Endothelial cell of umbilical vein (primary cell): ENCODE measurements at regions of chr10 and their contacts with region 1.

Region 1: DNA sequence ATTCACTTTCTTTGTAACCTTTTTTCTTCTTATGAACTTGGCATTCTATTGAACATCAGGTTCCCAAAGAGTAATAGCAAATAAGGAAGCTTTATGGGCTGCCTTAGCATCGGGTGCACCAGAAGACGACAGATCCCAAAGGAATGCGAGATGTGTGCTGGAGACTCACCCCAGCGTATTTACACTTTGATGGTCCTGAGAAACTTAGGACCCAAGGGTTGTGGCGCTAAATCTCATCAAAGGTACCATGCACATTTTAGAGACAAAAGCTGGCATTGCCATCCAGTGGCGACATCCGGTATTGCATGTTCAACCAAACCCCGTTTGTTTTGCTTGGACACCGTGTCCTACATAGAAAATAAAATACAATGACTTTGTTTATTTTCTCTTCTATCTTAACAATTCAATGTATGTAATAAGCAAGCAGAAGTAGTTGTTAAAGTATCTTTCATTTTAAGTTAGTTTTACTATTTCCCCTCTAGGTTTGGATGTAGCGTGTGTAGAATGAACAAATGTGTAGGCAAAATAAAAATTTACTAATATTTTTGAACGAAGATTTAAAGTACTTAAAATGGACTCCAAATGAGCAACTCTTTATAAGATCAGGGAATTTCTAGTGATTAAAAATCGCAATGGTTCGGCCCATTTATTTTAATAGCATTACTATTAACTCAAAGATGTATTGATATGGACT is 1154.8 kb downstream of the GATA3 start:
- DNase-seq: peak; percentile 82
- H3K4me3 ChIP-seq: no peak overlapping the region
- H3K27ac ChIP-seq: no peak overlapping the region
- H3K4me1 ChIP-seq: peaks cover 2% of the 10 kb centered on the region
- H3K27me3 ChIP-seq: no peaks in the 10 kb centered on the region
- CTCF ChIP-seq: peak; percentile 79 to 84
- POLR2A ChIP-seq: no peak

Region 2: DNA sequence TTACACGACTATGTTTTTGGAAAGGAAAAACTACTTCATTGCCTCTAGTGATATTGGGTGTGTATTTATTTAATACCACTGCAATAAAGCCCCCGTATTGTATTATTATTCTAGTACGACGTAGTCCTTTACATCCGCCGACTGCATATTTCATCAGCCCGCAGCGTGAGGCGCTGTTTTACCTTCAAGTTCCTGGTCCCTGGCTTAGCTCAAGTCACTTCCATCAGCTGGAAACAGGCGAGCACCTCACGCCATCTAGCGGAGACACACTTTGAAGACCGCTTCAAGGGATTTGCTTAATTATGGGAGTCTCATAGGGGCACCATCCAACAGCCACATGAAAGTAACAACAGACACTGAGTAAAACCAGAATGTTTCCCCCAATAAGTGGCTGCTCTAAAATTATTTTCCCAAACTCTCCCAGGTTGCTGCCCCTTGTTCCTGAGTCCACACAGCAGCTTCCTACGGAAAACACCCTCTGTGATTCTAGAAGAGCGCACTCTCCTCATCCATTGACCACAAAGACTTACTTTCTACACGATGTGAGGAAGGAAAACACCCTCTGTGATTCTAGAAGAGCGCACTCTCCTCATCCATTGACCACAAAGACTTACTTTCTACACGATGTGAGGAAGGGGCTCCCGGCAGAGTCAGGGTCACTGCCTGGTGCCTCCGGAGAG is 1521.9 kb before region 1 on chr10:
- CTCF ChIA-PET with region 1: interaction called, 11 read pairs
- POLR2A ChIA-PET with region 1: no interaction called
- dilution Hi-C with region 1: no loop called
- intact Hi-C with region 1: no loop called
- DNase-seq: peak; percentile 86
- H3K4me3 ChIP-seq: no peak overlapping the region
- H3K27ac ChIP-seq: no peak overlapping the region
- H3K4me1 ChIP-seq: no peaks in the 10 kb centered on the region
- H3K27me3 ChIP-seq: peaks cover 0 to 1% of the 10 kb centered on the region in 2 experiments
- CTCF ChIP-seq: peak; percentile 83 to 88
- POLR2A ChIP-seq: no peak

Region 3: DNA sequence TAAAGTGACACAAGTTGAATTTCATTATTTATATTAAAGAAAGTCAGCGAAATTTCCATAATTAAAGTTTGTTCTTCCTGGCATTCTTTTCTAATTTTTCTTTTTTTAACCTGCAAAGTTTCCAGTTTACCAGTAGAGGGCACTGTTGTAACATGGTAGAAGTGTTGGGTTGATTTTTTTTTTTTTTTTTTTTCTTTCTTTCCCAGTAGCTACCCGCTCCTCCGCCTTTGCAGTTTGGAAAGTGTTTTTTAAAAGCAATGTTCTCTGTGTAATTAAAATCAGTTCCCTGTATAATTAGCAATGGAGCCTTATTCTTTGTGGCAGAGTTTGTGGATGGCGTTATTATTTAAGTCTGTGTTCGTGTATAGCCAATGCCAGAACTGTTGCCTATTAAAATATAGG is 1337.2 kb before region 1 on chr10:
- CTCF ChIA-PET with region 1: interaction called, 64 read pairs
- POLR2A ChIA-PET with region 1: interaction called, 3 read pairs
- dilution Hi-C with region 1: no loop called
- intact Hi-C with region 1: loop called (anchors 1 kb)
- DNase-seq: peak; percentile 68
- H3K4me3 ChIP-seq: peak overlapping the region; percentile 26 to 78 (median 32)
- H3K27ac ChIP-seq: no peak overlapping the region
- H3K4me1 ChIP-seq: peaks cover 13% of the 10 kb centered on the region
- H3K27me3 ChIP-seq: no peaks in the 10 kb centered on the region
- CTCF ChIP-seq: peak; percentile 43 to 46
- POLR2A ChIP-seq: no peak

Region 4: DNA sequence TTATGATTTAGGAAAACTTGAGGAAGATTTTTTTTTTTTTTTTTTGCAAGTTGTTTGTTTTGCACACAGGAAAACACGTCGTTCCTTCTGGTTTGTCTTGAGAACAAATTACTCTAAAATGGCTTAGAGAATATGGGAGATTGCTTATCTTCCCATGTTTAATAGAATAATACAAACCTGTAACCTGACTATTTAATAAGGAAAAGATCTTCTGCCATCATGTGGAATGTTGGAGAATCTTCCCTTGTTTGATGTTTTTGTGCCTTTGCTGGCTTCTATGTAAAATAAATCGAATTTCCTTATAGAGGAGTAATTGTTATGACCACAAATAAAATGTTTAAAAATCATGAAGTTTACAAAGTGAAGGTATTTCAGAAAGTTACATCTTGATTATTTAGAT is 335.9 kb before region 1 on chr10:
- CTCF ChIA-PET with region 1: no interaction called
- POLR2A ChIA-PET with region 1: no interaction called
- dilution Hi-C with region 1: no loop called
- intact Hi-C with region 1: loop called (anchors 2 kb)
- DNase-seq: peak; percentile 22
- H3K4me3 ChIP-seq: no peak overlapping the region
- H3K27ac ChIP-seq: no peak overlapping the region
- H3K4me1 ChIP-seq: no peaks in the 10 kb centered on the region
- H3K27me3 ChIP-seq: no peaks in the 10 kb centered on the region
- CTCF ChIP-seq: no peak
- POLR2A ChIP-seq: no peak

Region 5: GRCh38 chr10:9126728-9127127 is 82.5 kb before region 1 on chr10:
- CTCF ChIA-PET with region 1: no interaction called
- POLR2A ChIA-PET with region 1: no interaction called
- dilution Hi-C with region 1: no loop called
- intact Hi-C with region 1: no loop called
- DNase-seq: no peak
- H3K4me3 ChIP-seq: no peak overlapping the region
- H3K27ac ChIP-seq: no peak overlapping the region
- H3K4me1 ChIP-seq: no peaks in the 10 kb centered on the region
- H3K27me3 ChIP-seq: no peaks in the 10 kb centered on the region
- CTCF ChIP-seq: no peak
- POLR2A ChIP-seq: no peak

Region 6: GRCh38 chr10:9193120-9193519 is 16.1 kb before region 1 on chr10:
- CTCF ChIA-PET with region 1: interaction called, 24 read pairs
- POLR2A ChIA-PET with region 1: no interaction called
- dilution Hi-C with region 1: no loop called
- intact Hi-C with region 1: no loop called
- DNase-seq: no peak
- H3K4me3 ChIP-seq: no peak overlapping the region
- H3K27ac ChIP-seq: no peak overlapping the region
- H3K4me1 ChIP-seq: no peaks in the 10 kb centered on the region
- H3K27me3 ChIP-seq: no peaks in the 10 kb centered on the region
- CTCF ChIP-seq: no peak
- POLR2A ChIP-seq: no peak